CD8-positive, alpha-beta memory T cell (primary cell): ENCODE measurements at regions of chr4 and their contacts with region 1.

Region 1: GRCh38 chr4:88033309-88033708 is 25.9 kb downstream of the PKD2 start:
- DNase-seq: peak in 4 of 5 donors; percentile 11 to 46 (median 38)
- H3K4me3 ChIP-seq: no peak overlapping the region
- H3K4me3 Mint-ChIP-seq: no peak overlapping the region
- H3K27ac ChIP-seq: no peak overlapping the region
- H3K27ac Mint-ChIP-seq: no peak overlapping the region
- H3K4me1 ChIP-seq: no peaks in the 10 kb centered on the region
- H3K4me1 Mint-ChIP-seq: peaks cover 0 to 1% (median 0%) of the 10 kb centered on the region in 3 donors
- H3K27me3 ChIP-seq: no peaks in the 10 kb centered on the region
- H3K27me3 Mint-ChIP-seq: no peaks in the 10 kb centered on the region

Region 2: GRCh38 chr4:88211473-88212252 is 178.4 kb after region 1 on chr4:
- CTCF ChIA-PET with region 1: interaction called, 17 read pairs
- POLR2A ChIA-PET with region 1: no interaction called
- DNase-seq: peak in 4 of 5 donors; percentile 28 to 49 (median 44)
- H3K4me3 ChIP-seq: no peak overlapping the region
- H3K4me3 Mint-ChIP-seq: no peak overlapping the region
- H3K27ac ChIP-seq: no peak overlapping the region
- H3K27ac Mint-ChIP-seq: no peak overlapping the region
- H3K4me1 ChIP-seq: no peaks in the 10 kb centered on the region
- H3K4me1 Mint-ChIP-seq: peaks cover 0 to 6% (median 0%) of the 10 kb centered on the region in 3 donors
- H3K27me3 ChIP-seq: no peaks in the 10 kb centered on the region
- H3K27me3 Mint-ChIP-seq: peaks cover 2 to 4% of the 10 kb centered on the region in 2 donors